Posterior vena cava (tissue), 2 donors: ENCODE measurements at regions of chr10 and their contacts with region 1.

Region 1: GRCh38 chr10:70699659-70700174 is 27.4 kb downstream of the ADAMTS14 start:
- DNase-seq: no peak

Region 2: DNA sequence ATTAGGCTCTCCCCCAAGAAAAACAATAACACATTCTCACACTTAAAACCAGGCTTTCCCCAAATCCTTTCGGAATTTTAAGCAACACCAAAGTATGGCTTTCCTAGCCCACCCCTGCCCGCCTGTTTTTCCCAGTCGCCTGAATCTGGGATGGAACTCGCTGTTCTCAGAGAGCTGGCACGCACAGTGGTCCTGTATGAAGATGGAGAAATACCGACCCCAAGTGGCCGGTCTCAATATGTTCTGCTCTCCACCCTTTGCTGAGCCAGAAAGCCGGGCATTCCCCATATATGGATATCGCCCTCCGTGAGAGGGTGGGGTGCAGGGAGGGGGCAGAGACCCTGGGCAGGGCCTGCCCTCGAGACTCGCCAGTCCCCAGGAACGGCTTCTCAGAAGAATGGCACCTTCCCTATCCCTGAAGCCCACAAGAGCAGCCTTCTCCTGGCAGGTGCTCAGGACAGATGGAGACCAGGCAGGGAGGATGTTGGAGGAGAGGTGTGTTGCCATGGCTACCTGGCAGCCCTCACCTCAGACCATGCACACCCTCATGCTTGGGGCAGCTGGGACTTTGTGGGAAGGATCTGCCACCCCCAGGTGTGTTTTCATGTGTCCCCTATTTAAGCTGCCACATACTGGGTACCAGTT is 1286.4 kb before region 1 on chr10:
- intact Hi-C with region 1: loop called in 1 of 2 experiments (anchors 5 kb)
- DNase-seq: peak; percentile 88

Region 3: DNA sequence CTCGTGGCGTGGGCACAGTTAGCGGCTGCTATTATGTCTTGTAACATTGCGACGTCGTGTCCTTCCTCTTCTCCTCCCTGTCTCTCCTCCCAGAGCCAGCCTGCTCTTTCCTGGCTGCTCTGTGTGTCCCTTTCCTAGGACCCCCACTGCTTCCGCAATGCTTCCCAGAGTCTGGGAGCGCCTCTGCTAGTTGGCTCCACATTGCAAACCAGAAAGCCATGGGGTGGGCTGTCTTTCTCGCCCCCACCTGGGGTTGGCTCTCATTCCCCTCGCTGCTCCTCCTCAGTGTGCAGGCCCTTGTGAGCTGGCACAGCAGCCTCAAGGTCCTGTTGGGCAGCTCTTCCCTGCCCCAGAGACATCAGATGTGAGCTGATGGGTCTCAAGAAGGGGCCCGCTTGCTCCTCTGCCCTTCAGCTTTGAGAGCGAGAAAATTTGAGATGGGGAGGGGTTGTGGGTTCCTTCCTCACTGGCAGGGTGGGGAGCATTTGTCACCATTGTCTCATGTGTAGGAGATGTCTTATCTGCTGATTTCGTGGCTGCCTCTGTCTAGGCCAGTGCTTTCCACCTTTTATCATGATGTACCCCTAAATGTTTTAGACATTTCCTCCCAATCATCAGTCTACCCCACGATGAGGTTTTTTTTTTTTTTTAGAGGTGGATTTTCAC is 24.1 kb before region 1 on chr10:
- intact Hi-C with region 1: loop called in 1 of 2 experiments (anchors 2 kb)
- DNase-seq: no peak